GM18951 (cell line): ENCODE measurements at regions of chr2 and their contacts with region 1.

Region 1: DNA sequence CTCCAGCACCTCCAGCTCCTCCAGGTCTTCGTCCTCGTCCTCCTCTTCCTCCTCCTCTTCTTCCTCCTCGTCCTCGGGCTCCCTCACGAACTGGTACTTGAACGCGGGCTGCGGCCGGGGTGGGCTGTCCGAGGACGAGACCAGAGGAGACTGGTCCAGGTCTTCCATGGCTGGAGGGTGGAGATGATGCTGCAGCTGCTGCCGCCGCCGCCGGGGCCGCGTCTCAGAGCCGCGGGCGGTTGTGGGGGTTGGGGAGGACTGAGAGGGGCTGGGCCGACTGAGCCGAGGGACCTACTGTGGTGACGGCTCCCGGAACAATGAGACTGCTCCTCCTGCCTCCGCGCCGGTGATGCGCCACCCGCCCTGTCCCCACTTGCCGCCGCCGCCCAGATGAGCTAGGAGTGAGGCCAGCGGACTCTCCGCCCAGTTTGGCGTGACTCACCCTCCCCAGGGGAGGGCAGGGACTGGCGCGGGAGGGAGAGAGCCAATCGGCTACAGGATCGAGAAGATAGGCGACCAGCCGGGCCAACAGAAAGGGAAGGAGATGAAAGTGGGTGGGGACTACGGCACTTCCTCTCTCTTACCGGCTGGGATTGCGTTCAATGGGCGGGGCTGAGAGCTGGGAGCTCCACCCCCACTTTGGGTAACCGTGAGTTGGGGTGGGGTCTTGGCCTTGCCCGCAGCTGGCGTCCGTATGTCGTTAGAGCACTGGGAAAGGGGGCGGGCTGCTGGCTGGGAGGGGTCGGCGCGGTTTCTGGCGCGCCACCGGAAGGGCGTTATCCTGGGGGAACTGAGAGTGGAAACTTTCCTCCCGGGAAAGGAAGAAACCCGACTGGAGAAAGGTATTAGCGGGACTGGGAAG is at the start of gene RTN4:
- POLR2A ChIP-seq: peak; percentile 95

Region 2: GRCh38 chr2:54673501-54673998 is 376.8 kb before region 1 on chr2:
- in situ Hi-C with region 1: no loop called
- POLR2A ChIP-seq: peak; percentile 28

Region 3: GRCh38 chr2:54814389-54815147 is 235.8 kb before region 1 on chr2:
- in situ Hi-C with region 1: no loop called
- POLR2A ChIP-seq: no peak

Region 4: DNA sequence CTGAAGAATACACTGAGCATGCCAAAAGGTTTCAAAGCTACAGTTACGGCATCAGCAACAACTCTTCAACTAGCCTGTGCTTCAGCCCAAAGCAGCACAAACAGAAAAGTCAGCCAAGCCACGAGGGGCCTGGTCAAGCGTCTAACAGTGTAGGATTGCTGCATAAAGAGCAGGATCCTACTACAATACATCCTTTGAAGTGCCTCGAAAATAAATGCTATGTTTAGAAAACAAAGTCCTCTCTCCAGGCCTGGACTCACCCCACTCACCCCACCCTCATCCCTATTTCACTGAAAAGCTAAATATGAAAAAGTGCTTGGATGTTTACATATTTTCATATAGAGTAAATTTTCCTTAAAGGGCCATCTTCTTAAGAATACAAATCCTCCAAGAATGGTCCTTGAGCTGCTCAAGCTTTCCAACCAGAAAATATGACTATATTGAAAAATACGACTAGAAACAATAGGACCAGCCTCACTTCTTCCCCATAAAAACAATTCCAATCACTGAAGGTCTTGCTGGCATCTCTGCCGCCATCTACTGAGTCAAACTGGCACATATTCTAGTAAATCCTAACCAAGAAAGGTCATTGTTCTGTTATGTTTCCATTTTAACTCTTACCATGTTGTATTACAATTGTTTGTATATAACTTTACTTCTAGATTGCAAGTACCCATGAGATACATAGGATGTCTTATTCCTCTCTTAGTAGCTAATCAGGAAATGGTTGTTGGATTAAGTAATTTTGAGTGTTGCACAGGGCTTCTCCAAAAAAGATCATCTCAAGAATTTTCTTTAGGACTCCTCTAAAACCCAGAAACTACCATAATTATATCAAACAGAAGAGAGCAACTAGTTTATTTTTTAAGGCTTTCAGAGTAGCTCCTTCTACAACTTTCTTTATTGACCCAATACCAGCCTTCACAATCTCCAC is 118.1 kb after region 1 on chr2:
- in situ Hi-C with region 1: loop called (anchors 10 kb)
- POLR2A ChIP-seq: no peak

Region 5: DNA sequence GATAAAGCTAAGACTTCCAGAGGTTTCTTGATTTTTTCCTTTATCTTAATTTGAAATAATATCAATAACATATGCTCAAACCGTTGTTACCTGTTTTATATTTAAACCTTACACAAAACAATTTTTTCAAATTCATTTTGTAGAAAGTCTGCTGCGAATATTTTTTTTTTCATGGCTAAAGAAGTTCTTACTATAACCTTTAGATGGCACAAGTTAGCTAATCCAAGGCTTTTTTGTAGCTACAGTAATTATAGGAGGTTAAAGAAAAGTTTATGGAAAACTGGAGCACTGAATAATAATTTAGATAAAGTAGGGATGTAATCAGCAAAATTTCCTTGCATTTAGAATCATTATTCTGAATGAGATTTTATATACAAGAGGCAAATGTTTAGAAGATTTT is 721.2 kb after region 1 on chr2:
- in situ Hi-C with region 1: no loop called
- POLR2A ChIP-seq: no peak